ENCODE measurements at regions of chr3 and their contacts with region 1.

Region 1: DNA sequence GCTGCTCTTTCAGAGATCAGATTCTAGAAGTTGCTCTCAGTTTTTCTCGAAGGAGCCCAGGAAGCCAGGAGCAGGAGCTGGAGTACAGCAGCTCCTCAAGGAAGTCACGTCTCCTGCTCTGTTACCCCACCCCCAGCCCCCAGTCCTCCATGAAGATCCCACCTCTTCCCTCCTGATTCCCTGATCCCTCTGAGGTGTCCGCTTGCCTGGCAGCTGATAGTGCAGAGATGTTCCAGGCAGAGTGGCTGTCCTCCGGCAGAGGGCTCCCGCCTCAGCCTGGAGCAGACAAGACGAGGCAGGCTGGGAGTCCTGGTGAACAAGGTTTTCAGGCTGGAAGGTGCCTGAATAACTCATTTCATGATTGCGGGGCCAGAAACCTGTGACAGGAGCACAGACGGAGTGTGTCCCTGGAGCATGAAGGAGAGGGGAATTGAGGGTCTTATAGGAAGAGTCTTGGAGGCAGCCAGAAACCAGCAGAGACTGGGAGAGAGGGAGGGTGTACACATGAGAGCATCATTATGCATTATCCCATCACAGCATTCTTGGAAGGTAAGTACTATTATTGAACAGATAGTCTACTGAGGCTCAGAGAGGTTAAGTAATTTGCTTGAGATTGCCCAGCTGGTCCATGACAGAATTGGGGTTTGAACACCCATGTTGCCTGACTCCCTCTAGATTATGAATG is 1.2 kb downstream of the HRH1 start:
- DNase-seq: peak; percentile 89
- ATAC-seq: peak; percentile 74
- H3K4me3 ChIP-seq: peak overlapping the region; percentile 78
- H3K27ac ChIP-seq: peak overlapping the region; percentile 54
- H3K4me1 ChIP-seq: peaks cover 15% of the 10 kb centered on the region
- H3K27me3 ChIP-seq: no peaks in the 10 kb centered on the region
- CTCF ChIP-seq: peak; percentile 91
- POLR2A ChIP-seq: peak; percentile 52
- RAD21 ChIP-seq: peak; percentile 88

Region 2: DNA sequence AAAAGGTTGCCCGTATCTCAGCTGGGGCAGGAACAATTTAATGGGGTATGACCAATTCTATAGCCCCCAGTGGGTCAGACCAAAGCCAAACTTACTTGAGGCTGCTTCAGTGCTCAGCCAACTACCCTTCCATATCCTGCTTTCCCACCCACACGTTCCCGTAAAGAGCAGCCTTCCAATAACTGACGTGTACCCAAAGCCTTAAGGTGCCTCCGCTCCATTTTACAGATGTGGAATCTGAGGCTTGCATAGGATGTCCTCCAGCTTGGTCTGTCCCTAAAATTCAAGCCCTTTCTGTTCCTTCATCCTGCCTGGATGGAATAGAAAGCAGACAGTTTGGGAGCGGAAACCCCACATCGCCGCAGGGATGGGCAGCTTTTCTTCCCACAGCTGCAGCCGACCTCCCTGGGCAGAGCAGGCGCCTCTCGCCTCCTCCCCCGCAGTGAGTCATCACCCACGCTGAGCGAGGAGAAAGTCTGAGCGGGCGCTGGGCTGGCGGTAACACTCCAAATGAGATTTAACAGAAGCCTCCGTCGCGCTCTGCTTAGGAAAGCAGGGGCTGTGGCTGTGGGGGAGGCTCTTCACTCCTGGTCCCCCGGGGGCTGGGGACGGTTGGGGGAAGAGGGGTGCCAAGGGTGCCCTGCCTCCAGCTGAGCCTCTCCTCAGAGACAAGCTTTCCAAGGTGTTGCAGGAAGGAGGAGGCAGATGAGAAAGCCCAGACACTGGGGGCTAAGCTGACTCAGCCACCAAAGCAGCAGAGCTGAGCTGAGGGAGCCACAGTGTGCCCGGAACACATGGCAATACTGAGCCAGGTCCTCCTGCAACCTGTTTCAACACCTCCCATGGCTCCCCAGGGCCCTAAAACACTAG is 59.0 kb before region 1 on chr3:
- CTCF ChIA-PET with region 1: no interaction called
- POLR2A ChIA-PET with region 1: no interaction called
- dilution Hi-C with region 1: no loop called
- in situ Hi-C with region 1: no loop called
- intact Hi-C with region 1: loop called (anchors 2 kb)
- DNase-seq: peak; percentile 91
- ATAC-seq: peak; percentile 98
- H3K4me3 ChIP-seq: peak overlapping the region; percentile 27
- H3K27ac ChIP-seq: peak overlapping the region; percentile 63
- H3K4me1 ChIP-seq: peaks cover 9% of the 10 kb centered on the region
- H3K27me3 ChIP-seq: no peaks in the 10 kb centered on the region
- CTCF ChIP-seq: no peak
- POLR2A ChIP-seq: peak; percentile 78
- RAD21 ChIP-seq: peak; percentile 35

Region 3: DNA sequence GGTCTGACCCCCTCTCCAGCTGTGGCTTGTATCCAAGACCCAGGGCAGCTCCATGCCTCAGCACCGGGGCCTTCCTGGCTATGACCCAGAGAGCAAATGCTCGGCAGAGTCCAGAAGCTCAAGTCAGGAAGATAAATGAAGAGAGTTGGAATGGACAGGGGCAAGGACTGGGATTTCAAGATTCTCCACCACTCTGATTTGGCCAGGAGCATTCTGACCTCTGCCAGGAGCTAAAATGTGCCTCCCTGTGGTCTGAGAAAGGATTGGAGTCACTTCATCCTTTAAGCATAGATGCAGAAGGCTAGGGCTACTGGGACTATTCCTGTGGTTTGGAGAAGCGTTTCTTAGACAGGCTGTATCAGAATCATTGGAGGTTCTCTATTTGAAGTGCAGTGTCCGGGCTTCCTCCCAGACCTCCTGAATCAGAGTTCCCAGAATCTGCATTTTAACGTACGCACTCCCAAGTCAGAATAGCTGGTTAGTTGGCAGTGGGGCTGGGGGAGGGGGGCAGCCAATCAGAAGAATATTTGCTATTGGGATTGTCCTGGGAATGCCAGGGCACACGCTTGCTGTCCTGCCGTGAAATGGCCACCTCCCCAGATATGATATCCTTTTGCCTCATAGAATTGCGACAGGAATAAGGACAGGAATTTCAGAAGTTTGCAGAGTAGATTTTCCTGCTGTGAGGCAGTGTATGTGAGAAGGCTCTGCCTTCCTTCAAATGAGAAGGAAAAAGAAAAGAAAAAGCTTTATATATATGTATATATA is 56.2 kb after region 1 on chr3:
- CTCF ChIA-PET with region 1: interaction called, 8 read pairs
- POLR2A ChIA-PET with region 1: no interaction called
- dilution Hi-C with region 1: no loop called
- in situ Hi-C with region 1: no loop called
- intact Hi-C with region 1: loop called (anchors 1 kb)
- DNase-seq: peak; percentile 46
- ATAC-seq: peak; percentile 43
- H3K4me3 ChIP-seq: no peak overlapping the region
- H3K27ac ChIP-seq: peak overlapping the region; percentile 51
- H3K4me1 ChIP-seq: peaks cover 19% of the 10 kb centered on the region
- H3K27me3 ChIP-seq: no peaks in the 10 kb centered on the region
- CTCF ChIP-seq: peak; percentile 34
- POLR2A ChIP-seq: no peak
- RAD21 ChIP-seq: peak; percentile 31; the same call in 1 of the 2 replicates

Region 4: GRCh38 chr3:11236595-11237461 is 81.3 kb after region 1 on chr3:
- CTCF ChIA-PET with region 1: no interaction called
- POLR2A ChIA-PET with region 1: no interaction called
- dilution Hi-C with region 1: no loop called
- in situ Hi-C with region 1: no loop called
- intact Hi-C with region 1: loop called (anchors 2 kb)
- DNase-seq: peak; percentile 69
- ATAC-seq: peak; percentile 16
- H3K4me3 ChIP-seq: no peak overlapping the region
- H3K27ac ChIP-seq: peak overlapping the region; percentile 86
- H3K4me1 ChIP-seq: peaks cover 5% of the 10 kb centered on the region
- H3K27me3 ChIP-seq: no peaks in the 10 kb centered on the region
- CTCF ChIP-seq: peak; percentile 56
- POLR2A ChIP-seq: no peak
- RAD21 ChIP-seq: peak; percentile 43

Region 5: GRCh38 chr3:11288786-11289682 is 133.6 kb after region 1 on chr3:
- CTCF ChIA-PET with region 1: no interaction called
- POLR2A ChIA-PET with region 1: no interaction called
- dilution Hi-C with region 1: no loop called
- in situ Hi-C with region 1: no loop called
- intact Hi-C with region 1: loop called (anchors 2 kb)
- DNase-seq: peak; percentile 96
- ATAC-seq: peak; percentile 79
- H3K4me3 ChIP-seq: peak overlapping the region; percentile 10; the same call in 1 of the 2 replicates
- H3K27ac ChIP-seq: peak overlapping the region; percentile 96
- H3K4me1 ChIP-seq: peaks cover 26% of the 10 kb centered on the region
- H3K27me3 ChIP-seq: no peaks in the 10 kb centered on the region
- CTCF ChIP-seq: no peak
- POLR2A ChIP-seq: peak; percentile 56; the same call in 1 of the 2 replicates
- RAD21 ChIP-seq: no peak

Region 6: DNA sequence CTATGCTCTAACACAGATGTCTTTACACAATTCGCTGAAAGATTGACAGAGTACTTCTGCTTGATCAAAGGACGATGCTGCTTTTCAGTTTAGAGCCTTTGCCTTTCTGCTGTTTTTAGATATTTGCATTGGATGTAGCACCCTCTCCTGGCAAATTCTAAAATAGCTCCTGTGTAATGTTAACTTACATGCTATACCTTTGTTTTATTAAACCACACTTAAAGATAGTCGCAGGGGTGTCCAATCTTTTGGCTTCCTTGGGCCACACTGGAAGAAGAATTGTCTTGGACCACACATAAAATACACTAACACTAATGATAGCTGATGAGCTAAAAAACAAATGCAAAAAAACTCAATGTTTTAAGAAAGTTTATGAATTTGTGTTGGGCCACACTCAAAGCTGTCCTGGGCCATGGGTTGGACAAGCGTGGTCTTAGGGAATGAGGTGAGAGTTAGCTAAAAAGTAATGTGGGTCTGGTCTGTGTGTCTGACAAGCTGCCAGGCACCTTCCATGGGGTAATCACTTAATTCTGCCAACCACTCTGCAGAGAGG is 179.6 kb after region 1 on chr3:
- CTCF ChIA-PET with region 1: interaction called, 18 read pairs
- POLR2A ChIA-PET with region 1: no interaction called
- dilution Hi-C with region 1: no loop called
- in situ Hi-C with region 1: loop called (anchors 25 kb)
- intact Hi-C with region 1: loop called (anchors 1 kb)
- DNase-seq: peak; percentile 81
- ATAC-seq: peak; percentile 81
- H3K4me3 ChIP-seq: no peak overlapping the region
- H3K27ac ChIP-seq: no peak overlapping the region
- H3K4me1 ChIP-seq: peaks cover 10% of the 10 kb centered on the region
- H3K27me3 ChIP-seq: no peaks in the 10 kb centered on the region
- CTCF ChIP-seq: peak; percentile 82
- POLR2A ChIP-seq: no peak
- RAD21 ChIP-seq: peak; percentile 91

Region 7: DNA sequence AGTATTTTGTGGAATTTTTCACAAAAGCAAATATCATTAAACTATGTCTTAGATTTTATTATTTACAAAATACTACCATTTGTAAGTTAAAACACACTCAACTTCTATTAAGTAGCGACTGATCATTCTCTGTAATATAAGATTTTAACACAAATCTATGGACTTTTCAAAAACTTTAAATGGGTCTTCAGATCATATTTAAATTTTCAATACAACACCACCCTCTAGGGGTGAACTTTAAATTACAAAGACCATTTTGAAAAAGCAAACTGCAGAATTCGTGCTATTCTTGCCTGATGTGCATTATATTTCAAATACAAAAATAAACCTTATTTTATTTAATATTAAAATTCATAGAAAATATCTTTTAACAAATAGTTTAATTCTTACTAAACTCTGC is 496.4 kb after region 1 on chr3:
- CTCF ChIA-PET with region 1: no interaction called
- POLR2A ChIA-PET with region 1: no interaction called
- dilution Hi-C with region 1: no loop called
- in situ Hi-C with region 1: no loop called
- intact Hi-C with region 1: loop called (anchors 2 kb)
- DNase-seq: peak; percentile 63
- ATAC-seq: peak; percentile 70
- H3K4me3 ChIP-seq: no peak overlapping the region
- H3K27ac ChIP-seq: no peak overlapping the region; the same call in 1 of the 2 replicates
- H3K4me1 ChIP-seq: no peaks in the 10 kb centered on the region
- H3K27me3 ChIP-seq: no peaks in the 10 kb centered on the region
- CTCF ChIP-seq: peak; percentile 55
- POLR2A ChIP-seq: no peak
- RAD21 ChIP-seq: peak; percentile 58

Measured in IMR-90 (cell line).